ENCODE measurements at regions of chr19 and their contacts with region 1.

Region 1: GRCh38 chr19:46392243-46392801 is 21.0 kb downstream of the CCDC8 start:
- DNase-seq: peak in 1 of 2 donors; percentile 71
- H3K4me3 ChIP-seq: no peak overlapping the region
- H3K27ac ChIP-seq: peak overlapping the region; percentile 55 to 70
- H3K4me1 ChIP-seq: peaks cover 0 to 39% (median 23%) of the 10 kb centered on the region in 4 donors
- H3K27me3 ChIP-seq: no peaks in the 10 kb centered on the region
- CTCF ChIP-seq: no peak

Region 2: DNA sequence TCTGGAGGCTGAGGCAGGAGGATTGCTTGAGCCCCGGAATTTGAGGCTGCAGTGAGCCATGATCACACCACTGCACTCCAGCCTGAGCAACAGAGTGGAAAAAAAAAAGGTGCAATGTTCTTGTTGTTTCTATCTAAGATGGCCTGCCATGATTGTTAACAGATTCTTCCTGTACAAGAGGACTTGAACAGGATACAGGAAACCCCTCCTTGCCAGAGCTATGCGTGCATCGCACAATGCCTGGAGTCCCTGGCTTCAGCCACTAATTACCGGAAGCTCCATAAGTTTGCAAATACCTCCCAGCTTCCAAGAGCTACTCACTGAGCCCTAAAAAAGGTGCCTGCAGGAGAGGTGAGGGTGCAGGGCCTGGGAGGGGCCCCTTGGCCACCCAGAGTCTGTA is 108.6 kb before region 1 on chr19:
- intact Hi-C with region 1: loop called (anchors 5 kb)
- DNase-seq: no peak
- H3K4me3 ChIP-seq: no peak overlapping the region
- H3K27ac ChIP-seq: no peak overlapping the region
- H3K4me1 ChIP-seq: peaks cover 0 to 14% (median under 1%) of the 10 kb centered on the region in 4 donors
- H3K27me3 ChIP-seq: peaks cover 0 to 2% of the 10 kb centered on the region in 2 donors
- CTCF ChIP-seq: no peak

Region 3: GRCh38 chr19:46431824-46432223 is 39.5 kb after region 1 on chr19:
- intact Hi-C with region 1: no loop called
- DNase-seq: peak in 1 of 2 donors; percentile 7
- H3K4me3 ChIP-seq: no peak overlapping the region
- H3K27ac ChIP-seq: no peak overlapping the region
- H3K4me1 ChIP-seq: peaks cover 0 to 22% (median 12%) of the 10 kb centered on the region in 4 donors
- H3K27me3 ChIP-seq: no peaks in the 10 kb centered on the region
- CTCF ChIP-seq: no peak

Region 4: GRCh38 chr19:46442808-46443450 is 50.6 kb after region 1 on chr19:
- intact Hi-C with region 1: no loop called
- DNase-seq: peak in 1 of 2 donors; percentile 61
- H3K4me3 ChIP-seq: no peak overlapping the region
- H3K27ac ChIP-seq: peak overlapping the region; percentile 46 to 55
- H3K4me1 ChIP-seq: peaks cover 0 to 25% (median 13%) of the 10 kb centered on the region in 4 donors
- H3K27me3 ChIP-seq: no peaks in the 10 kb centered on the region
- CTCF ChIP-seq: no peak

Region 5: DNA sequence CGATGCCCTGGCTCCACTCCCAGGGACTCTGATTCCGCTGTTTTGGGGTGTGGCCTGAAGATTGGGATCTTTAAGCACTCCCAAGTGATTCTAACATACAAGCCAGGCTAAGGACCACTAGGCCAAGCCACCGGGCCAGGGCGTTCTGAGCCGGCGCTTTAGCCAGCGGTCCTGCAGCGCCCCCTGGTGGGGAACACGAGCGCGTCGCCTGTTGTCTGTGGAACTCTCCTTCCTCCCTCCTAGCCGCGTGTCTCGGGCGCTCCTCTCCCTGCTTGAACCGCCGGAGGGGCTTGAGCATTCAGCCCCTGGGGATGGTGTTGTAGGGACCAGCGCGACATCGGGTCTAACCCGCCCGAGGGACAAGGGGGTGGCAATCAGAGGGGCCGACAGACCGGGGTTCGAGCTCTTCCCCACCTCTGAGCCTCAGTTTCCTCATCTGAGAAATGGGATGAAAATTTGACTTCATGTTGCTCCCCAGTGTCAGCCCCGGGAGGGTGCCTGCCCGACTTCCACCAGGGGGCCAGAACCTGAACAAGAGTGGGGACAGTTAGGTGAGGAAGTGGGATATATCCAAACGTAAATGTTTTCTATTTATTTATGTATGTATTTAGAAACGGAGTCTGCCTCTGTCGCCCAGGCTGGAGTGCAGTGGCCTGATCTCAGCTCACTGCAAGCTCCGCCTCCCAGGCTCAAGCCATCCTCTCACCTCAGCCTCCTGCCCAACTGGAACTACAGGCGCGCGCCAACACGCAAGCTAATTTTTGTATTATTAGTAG is 121.3 kb after region 1 on chr19:
- intact Hi-C with region 1: loop called (anchors 1 kb)
- DNase-seq: peak; percentile 68 to 87
- H3K4me3 ChIP-seq: no peak overlapping the region
- H3K27ac ChIP-seq: no peak overlapping the region
- H3K4me1 ChIP-seq: peaks cover 0 to 16% (median 4%) of the 10 kb centered on the region in 4 donors
- H3K27me3 ChIP-seq: peaks cover 0 to 5% of the 10 kb centered on the region in 2 donors
- CTCF ChIP-seq: peak; percentile 99

Measured in tibial artery (tissue), 4 donors.